T-cell (primary cell): ENCODE measurements at regions of chr17 and their contacts with region 1.

Region 1: GRCh38 chr17:76191896-76192295 is 48.4 kb downstream of the RNF157 start:
- DNase-seq: peak in 29 of 35 experiments; percentile 13 to 85 (median 50)
- ATAC-seq: peak; percentile 85 to 89 (median 88)
- H3K4me3 ChIP-seq: peak overlapping the region in 1 of 2 donors; percentile 15
- H3K4me3 Mint-ChIP-seq: peak overlapping the region; percentile 43 to 64 (median 60)
- H3K27ac ChIP-seq: peak overlapping the region; percentile 90
- H3K27ac Mint-ChIP-seq: peak overlapping the region; percentile 77 to 95
- H3K4me1 ChIP-seq: peaks cover 67 to 76% of the 10 kb centered on the region in 2 experiments
- H3K4me1 Mint-ChIP-seq: peaks cover 80 to 91% (median 84%) of the 10 kb centered on the region in 3 donors
- H3K27me3 ChIP-seq: no peaks in the 10 kb centered on the region
- H3K27me3 Mint-ChIP-seq: no peaks in the 10 kb centered on the region

Region 2: GRCh38 chr17:75996665-75997590 is 195.0 kb before region 1 on chr17:
- CTCF ChIA-PET with region 1: no interaction called
- POLR2A ChIA-PET with region 1: no interaction called
- DNase-seq: peak in 22 of 35 experiments; percentile 16 to 65 (median 23)
- ATAC-seq: peak; percentile 35 to 86 (median 50)
- H3K4me3 ChIP-seq: no peak overlapping the region
- H3K4me3 Mint-ChIP-seq: peak overlapping the region in 2 of 3 donors; percentile 15 to 57
- H3K27ac ChIP-seq: peak overlapping the region; percentile 34
- H3K27ac Mint-ChIP-seq: peak overlapping the region; percentile 82 to 83
- H3K4me1 ChIP-seq: peaks cover 6 to 15% of the 10 kb centered on the region in 2 experiments
- H3K4me1 Mint-ChIP-seq: peaks cover 13 to 16% (median 14%) of the 10 kb centered on the region in 3 donors
- H3K27me3 ChIP-seq: no peaks in the 10 kb centered on the region
- H3K27me3 Mint-ChIP-seq: no peaks in the 10 kb centered on the region

Region 3: DNA sequence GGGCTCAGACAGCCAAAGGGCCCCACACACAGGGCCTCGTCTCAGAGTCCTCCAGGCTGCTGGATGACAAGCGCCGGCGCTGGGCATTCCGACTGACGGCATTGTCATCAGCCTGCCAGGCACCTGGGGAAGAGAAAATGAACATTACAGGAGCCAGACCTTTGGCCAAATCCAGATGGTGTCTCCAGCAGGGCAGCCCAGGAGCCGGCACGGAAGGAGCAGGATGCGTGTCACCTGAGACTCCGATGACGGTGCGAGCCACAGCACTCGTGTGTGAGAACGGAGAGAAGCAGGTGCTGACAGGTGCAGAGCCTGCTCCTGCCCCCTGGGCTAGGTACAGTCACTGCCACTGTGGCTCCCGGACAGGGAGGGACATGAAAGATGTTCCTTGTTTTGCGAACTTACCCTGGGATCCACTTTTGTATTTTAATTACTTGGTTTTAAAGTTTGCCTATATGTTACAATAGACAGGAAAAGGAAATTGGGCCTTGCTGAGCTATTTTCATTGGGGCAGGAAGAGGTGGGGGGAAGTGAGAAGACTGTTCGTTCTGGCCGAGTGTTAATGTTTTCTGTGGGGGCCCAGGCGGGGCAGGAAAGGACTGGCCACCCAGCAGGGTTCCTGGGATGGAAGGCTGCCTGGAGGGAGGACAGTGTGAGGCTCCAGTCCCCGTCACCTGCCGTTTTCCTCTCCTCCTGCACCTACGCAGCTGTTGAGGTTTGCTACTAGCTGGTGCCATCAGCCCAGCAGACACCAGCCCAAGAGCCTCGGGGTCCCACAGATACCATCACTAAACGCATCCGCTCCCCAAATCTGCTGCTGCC is 46.5 kb before region 1 on chr17:
- CTCF ChIA-PET with region 1: no interaction called
- POLR2A ChIA-PET with region 1: interaction called in 1 of 2 experiments, 10 read pairs
- DNase-seq: peak; percentile 26 to 77 (median 52)
- ATAC-seq: peak; percentile 54 to 65 (median 64)
- H3K4me3 ChIP-seq: peak overlapping the region in 1 of 2 donors; percentile 12
- H3K4me3 Mint-ChIP-seq: peak overlapping the region; percentile 22 to 76 (median 68)
- H3K27ac ChIP-seq: peak overlapping the region; percentile 95
- H3K27ac Mint-ChIP-seq: peak overlapping the region; percentile 96 to 98
- H3K4me1 ChIP-seq: peaks cover 48 to 72% of the 10 kb centered on the region in 2 experiments
- H3K4me1 Mint-ChIP-seq: peaks cover 73 to 76% (median 74%) of the 10 kb centered on the region in 3 donors
- H3K27me3 ChIP-seq: peaks cover 0 to 11% of the 10 kb centered on the region in 2 experiments
- H3K27me3 Mint-ChIP-seq: peaks cover 0 to 2% of the 10 kb centered on the region in 2 donors

Region 4: GRCh38 chr17:76612977-76613851 is 421.3 kb after region 1 on chr17:
- CTCF ChIA-PET with region 1: no interaction called
- POLR2A ChIA-PET with region 1: interaction called in 1 of 2 experiments, 14 read pairs
- DNase-seq: no peak
- ATAC-seq: no peak
- H3K4me3 ChIP-seq: no peak overlapping the region
- H3K4me3 Mint-ChIP-seq: no peak overlapping the region
- H3K27ac ChIP-seq: no peak overlapping the region
- H3K27ac Mint-ChIP-seq: no peak overlapping the region
- H3K4me1 ChIP-seq: peaks cover 0 to 7% of the 10 kb centered on the region in 2 experiments
- H3K4me1 Mint-ChIP-seq: peaks cover 0 to 4% (median 0%) of the 10 kb centered on the region in 3 donors
- H3K27me3 ChIP-seq: peaks cover 0 to 3% of the 10 kb centered on the region in 2 experiments
- H3K27me3 Mint-ChIP-seq: peaks cover 0 to 4% of the 10 kb centered on the region in 2 donors